Activated CD8-positive, alpha-beta T cell treated with anti-CD3 and anti-CD28 coated beads, Interleukin-2, amount 10 ng/mL, durations not matched to agents 7 days and 5 days (primary cell): ENCODE measurements at regions of chr1 and their contacts with region 1.

Region 1: DNA sequence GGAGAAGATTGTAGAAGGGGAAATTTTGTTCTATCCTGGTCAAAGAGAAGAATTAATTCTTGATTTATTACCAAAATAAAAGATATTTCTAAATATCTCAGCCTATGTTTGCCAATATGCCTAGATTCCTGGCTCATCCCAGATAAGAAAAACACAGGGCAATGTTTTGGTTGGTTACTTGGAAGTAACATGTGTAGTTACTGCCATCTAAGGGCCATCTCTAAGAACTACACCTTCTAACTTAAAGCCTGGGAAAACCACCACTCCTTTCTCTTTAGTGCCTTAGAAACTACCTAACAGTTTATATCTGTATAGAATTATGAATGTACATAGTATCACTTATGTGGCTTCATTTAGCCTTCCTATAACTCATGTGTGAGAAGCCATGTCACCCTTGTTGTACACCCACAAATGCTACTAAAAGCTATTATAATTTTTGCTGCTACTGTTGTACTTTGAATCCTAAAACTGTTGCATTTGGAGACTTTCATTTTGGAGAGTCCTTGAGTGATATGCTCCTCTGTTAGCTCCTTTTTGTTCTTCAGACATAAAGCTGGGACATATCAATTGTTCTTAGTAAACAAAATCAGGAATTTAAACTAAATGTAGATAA is 4.5 kb downstream of the AIM2 start:
- DNase-seq: no peak
- ATAC-seq: no peak
- H3K4me3 Mint-ChIP-seq: no peak overlapping the region
- H3K27ac Mint-ChIP-seq: no peak overlapping the region
- H3K4me1 Mint-ChIP-seq: peaks cover 29% of the 10 kb centered on the region
- H3K27me3 Mint-ChIP-seq: peaks cover 5% of the 10 kb centered on the region

Region 2: GRCh38 chr1:158969855-158970254 is 102.2 kb before region 1 on chr1:
- CTCF ChIA-PET with region 1: no interaction called
- POLR2A ChIA-PET with region 1: no interaction called
- DNase-seq: no peak
- ATAC-seq: no peak
- H3K4me3 Mint-ChIP-seq: no peak overlapping the region
- H3K27ac Mint-ChIP-seq: no peak overlapping the region
- H3K4me1 Mint-ChIP-seq: no peaks in the 10 kb centered on the region
- H3K27me3 Mint-ChIP-seq: peaks cover 9% of the 10 kb centered on the region

Region 3: GRCh38 chr1:159009704-159010361 is 62.2 kb before region 1 on chr1 and contains the start of gene IFI16:
- CTCF ChIA-PET with region 1: interaction called, 20 read pairs
- POLR2A ChIA-PET with region 1: interaction called, 84 read pairs
- DNase-seq: peak; percentile 85
- ATAC-seq: peak; percentile 66
- H3K4me3 Mint-ChIP-seq: peak within 1 kb of the TSS; percentile 88
- H3K27ac Mint-ChIP-seq: peak within 1 kb of the TSS; percentile 94
- H3K4me1 Mint-ChIP-seq: peaks cover 44% of the 10 kb centered on the region
- H3K27me3 Mint-ChIP-seq: no peaks in the 10 kb centered on the region
- total RNA-seq, gene IFI16: 308 to 314 TPM

Region 4: DNA sequence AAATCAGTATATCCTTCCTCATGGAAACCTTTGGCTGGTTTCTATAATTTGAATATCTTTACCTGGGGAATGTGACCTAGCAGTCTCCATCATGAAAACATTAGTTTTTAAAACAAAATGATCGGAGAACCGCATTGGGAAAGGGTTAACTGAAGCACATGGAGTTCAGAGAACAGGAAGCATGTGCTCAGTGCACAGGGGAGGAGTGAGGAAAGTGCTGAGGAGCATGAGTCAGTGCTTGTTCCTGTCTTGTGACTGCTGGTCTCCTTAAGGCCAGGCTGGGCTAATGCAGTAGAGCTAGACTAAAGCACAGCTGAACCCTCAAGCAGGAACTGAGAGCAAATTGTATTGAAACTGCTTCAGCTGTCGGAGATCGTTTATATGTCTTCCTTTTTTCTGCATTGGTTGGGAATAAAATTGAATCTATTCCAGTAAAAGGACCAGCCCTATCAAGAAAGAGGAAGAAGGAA is 56.6 kb before region 1 on chr1:
- CTCF ChIA-PET with region 1: interaction called, 20 read pairs
- POLR2A ChIA-PET with region 1: interaction called, 84 read pairs
- DNase-seq: peak; percentile 84
- ATAC-seq: peak; percentile 89
- H3K4me3 Mint-ChIP-seq: peak overlapping the region; percentile 82
- H3K27ac Mint-ChIP-seq: peak overlapping the region; percentile 93
- H3K4me1 Mint-ChIP-seq: peaks cover 61% of the 10 kb centered on the region
- H3K27me3 Mint-ChIP-seq: no peaks in the 10 kb centered on the region

Region 5: DNA sequence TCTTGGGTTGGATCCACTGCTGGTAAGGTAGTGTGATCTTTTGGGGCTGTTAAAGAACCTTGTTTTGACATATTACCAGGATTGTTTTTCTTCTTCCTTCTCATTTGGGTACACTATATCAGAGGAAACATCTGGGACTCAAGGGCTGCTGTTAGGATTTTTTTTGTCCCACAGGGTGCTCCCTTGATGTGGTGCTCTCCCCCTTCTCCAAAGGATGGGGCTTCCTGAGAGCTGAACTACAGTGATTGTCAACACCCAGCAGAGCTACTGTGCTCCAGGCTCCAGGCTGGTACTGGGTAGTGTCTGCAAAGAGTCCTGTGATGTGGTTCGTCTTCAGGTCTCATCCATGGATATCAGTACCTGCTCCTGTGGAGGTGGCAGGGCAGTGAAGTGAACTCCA is 41.8 kb before region 1 on chr1:
- CTCF ChIA-PET with region 1: interaction called, 10 read pairs
- POLR2A ChIA-PET with region 1: no interaction called
- DNase-seq: no peak
- ATAC-seq: no peak
- H3K4me3 Mint-ChIP-seq: no peak overlapping the region
- H3K27ac Mint-ChIP-seq: peak overlapping the region; percentile 54
- H3K4me1 Mint-ChIP-seq: peaks cover 72% of the 10 kb centered on the region
- H3K27me3 Mint-ChIP-seq: no peaks in the 10 kb centered on the region

Region 6: DNA sequence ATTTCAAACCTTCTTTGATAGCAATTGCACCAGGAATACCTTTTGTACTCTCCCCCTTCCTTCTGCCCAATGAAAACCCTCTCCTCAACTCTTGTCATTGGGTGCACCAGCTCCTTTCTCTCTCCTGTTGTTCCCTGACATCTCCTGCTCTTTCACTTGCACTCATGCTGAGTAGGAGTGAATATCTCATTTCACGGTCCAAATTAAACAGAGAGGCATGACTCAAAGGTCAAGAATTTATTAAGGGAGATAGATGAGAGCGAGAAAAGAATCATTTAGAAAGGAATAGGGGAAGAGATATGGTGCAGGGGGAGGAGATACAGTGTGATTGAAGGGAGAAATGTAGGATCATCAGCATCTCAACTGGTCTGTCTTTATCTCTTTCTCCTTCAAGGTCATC is 17.6 kb before region 1 on chr1:
- CTCF ChIA-PET with region 1: interaction called, 27 read pairs
- POLR2A ChIA-PET with region 1: interaction called, 3 read pairs
- DNase-seq: no peak
- ATAC-seq: no peak
- H3K4me3 Mint-ChIP-seq: no peak overlapping the region
- H3K27ac Mint-ChIP-seq: peak overlapping the region; percentile 43
- H3K4me1 Mint-ChIP-seq: peaks cover 40% of the 10 kb centered on the region
- H3K27me3 Mint-ChIP-seq: no peaks in the 10 kb centered on the region

Region 7: GRCh38 chr1:159089184-159089791 is 17.2 kb after region 1 on chr1:
- CTCF ChIA-PET with region 1: interaction called, 55 read pairs
- POLR2A ChIA-PET with region 1: interaction called, 12 read pairs
- DNase-seq: peak; percentile 32
- ATAC-seq: peak; percentile 41
- H3K4me3 Mint-ChIP-seq: no peak overlapping the region
- H3K27ac Mint-ChIP-seq: no peak overlapping the region
- H3K4me1 Mint-ChIP-seq: peaks cover 31% of the 10 kb centered on the region
- H3K27me3 Mint-ChIP-seq: peaks cover 3% of the 10 kb centered on the region